A673 (cell line): ENCODE measurements at regions of chr10 and their contacts with region 1.

Region 1: DNA sequence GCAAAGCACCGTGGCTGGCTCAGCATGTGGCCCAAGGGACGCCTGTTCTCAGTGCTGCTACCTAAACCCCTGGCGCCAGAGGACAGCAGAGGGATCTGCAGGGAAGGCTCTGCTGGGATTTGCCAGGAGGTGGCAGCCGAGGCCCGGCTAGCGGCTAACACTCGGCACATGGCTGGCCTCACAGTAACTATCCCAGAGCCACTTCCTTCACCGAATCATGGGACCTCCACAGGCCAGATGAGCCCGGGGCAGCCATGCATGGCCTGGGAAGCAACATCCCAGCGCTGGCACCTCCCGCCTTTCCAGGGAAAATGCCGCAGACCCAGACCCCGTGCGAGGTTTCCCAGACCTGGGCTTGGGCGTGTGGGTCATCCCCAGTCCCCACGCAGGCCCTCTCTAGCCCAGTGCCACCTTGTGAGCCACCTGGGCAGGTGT is 36.4 kb downstream of the DPYSL4 start:
- DNase-seq: peak; percentile 89
- H3K4me3 ChIP-seq: no peak overlapping the region
- H3K27ac ChIP-seq: no peak overlapping the region
- H3K4me1 ChIP-seq: no peaks in the 10 kb centered on the region
- H3K27me3 ChIP-seq: no peaks in the 10 kb centered on the region
- CTCF ChIP-seq: peak; percentile 96

Region 2: DNA sequence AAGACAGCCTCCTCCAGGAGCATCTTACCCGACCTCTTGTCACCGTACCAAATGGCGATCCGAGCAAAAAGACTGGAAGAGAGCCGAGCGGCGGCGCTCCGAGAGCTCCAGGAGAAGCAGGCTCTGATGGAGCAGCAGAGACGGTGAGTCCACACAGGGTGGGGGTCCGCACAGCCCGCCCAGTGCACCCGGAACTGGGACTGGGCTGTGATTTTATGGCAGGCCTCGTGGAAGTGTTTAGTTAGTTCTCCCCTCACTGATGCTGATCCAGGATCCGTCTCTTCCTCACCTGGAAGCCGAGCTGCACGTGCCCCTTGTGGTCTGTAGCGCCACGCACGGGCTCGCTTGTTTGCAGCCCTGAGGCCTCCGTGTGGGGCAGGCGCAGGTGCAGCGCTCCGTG is 128.4 kb after region 1 on chr10:
- CTCF ChIA-PET with region 1: no interaction called
- POLR2A ChIA-PET with region 1: no interaction called
- intact Hi-C with region 1: loop called (anchors 1 kb)
- DNase-seq: no peak
- H3K4me3 ChIP-seq: no peak overlapping the region
- H3K27ac ChIP-seq: no peak overlapping the region
- H3K4me1 ChIP-seq: no peaks in the 10 kb centered on the region
- H3K27me3 ChIP-seq: no peaks in the 10 kb centered on the region
- CTCF ChIP-seq: no peak

Region 3: GRCh38 chr10:132452631-132453469 is 229.7 kb after region 1 on chr10:
- CTCF ChIA-PET with region 1: no interaction called
- POLR2A ChIA-PET with region 1: no interaction called
- intact Hi-C with region 1: loop called (anchors 1 kb)
- DNase-seq: peak; percentile 82
- H3K4me3 ChIP-seq: peak overlapping the region; percentile 13
- H3K27ac ChIP-seq: peak overlapping the region; percentile 42
- H3K4me1 ChIP-seq: peaks cover 20% of the 10 kb centered on the region
- H3K27me3 ChIP-seq: no peaks in the 10 kb centered on the region
- CTCF ChIP-seq: peak; percentile 83

Region 4: GRCh38 chr10:132637477-132638129 is 414.4 kb after region 1 on chr10:
- CTCF ChIA-PET with region 1: no interaction called
- POLR2A ChIA-PET with region 1: no interaction called
- intact Hi-C with region 1: loop called (anchors 5 kb)
- DNase-seq: peak; percentile 70
- H3K4me3 ChIP-seq: no peak overlapping the region
- H3K27ac ChIP-seq: no peak overlapping the region
- H3K4me1 ChIP-seq: no peaks in the 10 kb centered on the region
- H3K27me3 ChIP-seq: no peaks in the 10 kb centered on the region
- CTCF ChIP-seq: peak; percentile 81

Region 5: GRCh38 chr10:132808383-132809231 is 585.4 kb after region 1 on chr10:
- CTCF ChIA-PET with region 1: no interaction called
- POLR2A ChIA-PET with region 1: no interaction called
- intact Hi-C with region 1: no loop called
- DNase-seq: no peak
- H3K4me3 ChIP-seq: no peak overlapping the region
- H3K27ac ChIP-seq: no peak overlapping the region
- H3K4me1 ChIP-seq: no peaks in the 10 kb centered on the region
- H3K27me3 ChIP-seq: peaks cover 46% of the 10 kb centered on the region
- CTCF ChIP-seq: no peak